Activated B cell treated with CpG ODN at 0.5 μM for 24 hours (primary cell): ENCODE measurements at regions of chr10 and their contacts with region 1.

Region 1: GRCh38 chr10:124697830-124698544 is 46.2 kb downstream of the FAM53B start:
- DNase-seq: peak; percentile 44
- ATAC-seq: peak; percentile 45
- H3K4me3 Mint-ChIP-seq: peak overlapping the region; percentile 69
- H3K27ac Mint-ChIP-seq: peak overlapping the region; percentile 96
- H3K4me1 Mint-ChIP-seq: peaks cover 100% of the 10 kb centered on the region
- H3K27me3 Mint-ChIP-seq: no peaks in the 10 kb centered on the region
- CTCF ChIP-seq: no peak

Region 2: DNA sequence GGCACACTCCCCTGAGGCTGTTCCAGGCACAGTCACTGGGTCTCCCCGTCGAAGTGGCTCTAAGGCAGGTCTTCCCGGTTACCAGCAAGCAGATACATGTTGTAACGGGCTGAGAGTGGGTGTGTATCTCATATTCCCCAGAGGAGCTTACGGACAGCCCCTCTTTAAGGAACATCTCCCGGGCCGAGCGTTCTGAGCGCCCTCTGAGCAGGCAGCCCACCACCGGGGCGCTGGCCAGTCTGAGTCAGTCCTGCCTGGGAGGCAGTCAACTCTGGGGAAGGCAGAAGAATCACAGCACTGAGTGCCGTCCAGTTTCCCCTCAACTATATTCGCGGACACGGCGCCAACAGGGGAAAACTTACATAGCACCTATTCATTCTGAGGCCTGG is 119.0 kb before region 1 on chr10:
- CTCF ChIA-PET with region 1: no interaction called
- POLR2A ChIA-PET with region 1: no interaction called
- intact Hi-C with region 1: no loop called
- DNase-seq: no peak
- ATAC-seq: peak; percentile 21
- H3K4me3 Mint-ChIP-seq: no peak overlapping the region
- H3K27ac Mint-ChIP-seq: no peak overlapping the region
- H3K4me1 Mint-ChIP-seq: peaks cover 25% of the 10 kb centered on the region
- H3K27me3 Mint-ChIP-seq: no peaks in the 10 kb centered on the region
- CTCF ChIP-seq: no peak

Region 3: GRCh38 chr10:124647421-124648130 is 50.4 kb before region 1 on chr10:
- CTCF ChIA-PET with region 1: interaction called, 3 read pairs
- POLR2A ChIA-PET with region 1: interaction called, 15 read pairs
- intact Hi-C with region 1: no loop called
- DNase-seq: no peak
- ATAC-seq: peak; percentile 64
- H3K4me3 Mint-ChIP-seq: peak overlapping the region; percentile 62
- H3K27ac Mint-ChIP-seq: peak overlapping the region; percentile 88
- H3K4me1 Mint-ChIP-seq: peaks cover 100% of the 10 kb centered on the region
- H3K27me3 Mint-ChIP-seq: no peaks in the 10 kb centered on the region
- CTCF ChIP-seq: no peak

Region 4: GRCh38 chr10:124709861-124710260 is 11.9 kb after region 1 on chr10:
- CTCF ChIA-PET with region 1: interaction called, 5 read pairs
- POLR2A ChIA-PET with region 1: interaction called, 78 read pairs
- intact Hi-C with region 1: loop called (anchors 1 kb)
- DNase-seq: no peak
- ATAC-seq: no peak
- H3K4me3 Mint-ChIP-seq: no peak overlapping the region
- H3K27ac Mint-ChIP-seq: peak overlapping the region; percentile 82
- H3K4me1 Mint-ChIP-seq: peaks cover 96% of the 10 kb centered on the region
- H3K27me3 Mint-ChIP-seq: no peaks in the 10 kb centered on the region
- CTCF ChIP-seq: no peak

Region 5: DNA sequence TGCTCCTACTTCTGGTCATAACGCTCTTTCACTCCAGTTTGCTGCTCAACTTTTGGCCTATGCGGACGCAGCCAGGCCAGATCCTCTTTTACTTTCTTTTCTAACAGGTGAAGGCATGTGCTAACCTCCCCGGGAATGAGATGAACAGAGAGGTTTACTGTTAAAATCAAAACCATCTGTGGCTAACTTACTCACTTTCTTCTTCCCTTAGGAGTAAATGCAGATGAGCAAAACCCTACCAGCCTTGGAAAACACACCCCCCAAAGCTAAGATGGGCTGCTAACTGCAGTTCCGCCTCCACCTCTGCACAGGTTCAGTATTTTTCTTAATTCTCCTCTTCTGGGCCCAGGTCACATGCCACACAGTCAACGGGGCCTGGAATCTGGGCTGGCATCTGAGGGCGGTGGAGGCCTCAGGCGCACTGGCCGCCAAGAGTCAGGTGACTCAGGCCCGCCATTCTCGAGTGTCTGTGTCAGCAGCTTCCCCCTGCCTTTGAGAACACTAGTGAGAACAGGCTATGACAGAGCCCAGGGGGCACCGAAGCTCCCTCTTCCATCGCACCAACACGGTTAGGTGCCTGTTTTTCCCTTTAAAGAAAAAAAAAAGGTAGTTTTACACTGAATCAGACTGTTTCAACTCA is 35.1 kb after region 1 on chr10:
- CTCF ChIA-PET with region 1: interaction called, 4 read pairs
- POLR2A ChIA-PET with region 1: interaction called, 18 read pairs
- intact Hi-C with region 1: no loop called
- DNase-seq: no peak
- ATAC-seq: peak; percentile 43
- H3K4me3 Mint-ChIP-seq: peak overlapping the region; percentile 58
- H3K27ac Mint-ChIP-seq: peak overlapping the region; percentile 82
- H3K4me1 Mint-ChIP-seq: peaks cover 100% of the 10 kb centered on the region
- H3K27me3 Mint-ChIP-seq: no peaks in the 10 kb centered on the region
- CTCF ChIP-seq: no peak